ENCODE measurements at regions of chr18 and their contacts with region 1.

Region 1: DNA sequence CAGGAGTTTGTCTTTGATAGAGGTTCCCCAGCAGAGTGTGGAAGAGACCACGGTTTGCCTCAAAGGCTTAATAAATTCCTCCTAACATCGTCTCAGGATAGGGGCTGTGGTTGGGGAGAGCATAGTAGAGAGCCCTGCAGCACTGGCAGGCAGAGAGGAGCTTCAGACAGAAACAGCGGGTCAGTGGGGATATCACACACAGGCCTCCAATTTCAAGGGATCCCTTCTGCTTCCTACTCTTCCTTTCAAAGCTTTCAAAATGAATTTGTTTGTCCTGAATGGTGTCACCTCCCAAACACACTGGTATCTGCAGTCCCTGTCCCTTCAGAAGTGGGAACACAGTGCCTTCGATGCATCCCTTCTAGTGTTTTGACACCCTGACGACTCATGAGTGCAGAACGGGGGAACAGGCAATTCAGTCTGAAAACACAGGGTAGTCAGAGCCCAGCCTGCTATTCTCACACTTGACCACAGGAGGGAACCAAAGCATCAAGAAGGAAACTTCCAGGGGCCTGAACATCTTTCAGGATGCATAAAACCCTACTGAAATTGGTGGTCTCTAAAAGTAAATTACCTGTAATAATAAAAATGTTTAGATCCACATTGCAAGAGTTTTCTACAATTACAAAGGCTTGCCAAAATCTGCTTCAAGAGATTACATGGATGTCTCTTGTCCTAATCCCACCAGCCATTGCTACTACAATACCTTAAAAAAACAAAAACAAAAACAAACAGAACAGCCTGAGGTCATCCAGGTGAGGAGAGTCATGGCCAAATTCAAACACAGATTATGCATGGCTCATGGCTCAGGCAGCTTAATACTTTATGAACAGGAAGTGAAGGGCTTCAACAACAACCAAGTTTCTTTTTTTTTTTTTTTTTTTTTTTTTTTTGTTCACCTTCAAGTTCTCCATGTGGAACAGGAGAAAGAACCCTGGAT is 49.8 kb downstream of the SLC14A2 start:
- DNase-seq: peak; percentile 76
- CTCF ChIP-seq: peak; percentile 92

Region 2: GRCh38 chr18:45517181-45517741 is 147.8 kb before region 1 on chr18:
- CTCF ChIA-PET with region 1: no interaction called
- POLR2A ChIA-PET with region 1: no interaction called
- DNase-seq: no peak
- CTCF ChIP-seq: no peak

Region 3: GRCh38 chr18:45677276-45677807 is 12.2 kb after region 1 on chr18:
- CTCF ChIA-PET with region 1: interaction called, 21 read pairs
- POLR2A ChIA-PET with region 1: no interaction called
- DNase-seq: no peak
- CTCF ChIP-seq: no peak

Region 4: DNA sequence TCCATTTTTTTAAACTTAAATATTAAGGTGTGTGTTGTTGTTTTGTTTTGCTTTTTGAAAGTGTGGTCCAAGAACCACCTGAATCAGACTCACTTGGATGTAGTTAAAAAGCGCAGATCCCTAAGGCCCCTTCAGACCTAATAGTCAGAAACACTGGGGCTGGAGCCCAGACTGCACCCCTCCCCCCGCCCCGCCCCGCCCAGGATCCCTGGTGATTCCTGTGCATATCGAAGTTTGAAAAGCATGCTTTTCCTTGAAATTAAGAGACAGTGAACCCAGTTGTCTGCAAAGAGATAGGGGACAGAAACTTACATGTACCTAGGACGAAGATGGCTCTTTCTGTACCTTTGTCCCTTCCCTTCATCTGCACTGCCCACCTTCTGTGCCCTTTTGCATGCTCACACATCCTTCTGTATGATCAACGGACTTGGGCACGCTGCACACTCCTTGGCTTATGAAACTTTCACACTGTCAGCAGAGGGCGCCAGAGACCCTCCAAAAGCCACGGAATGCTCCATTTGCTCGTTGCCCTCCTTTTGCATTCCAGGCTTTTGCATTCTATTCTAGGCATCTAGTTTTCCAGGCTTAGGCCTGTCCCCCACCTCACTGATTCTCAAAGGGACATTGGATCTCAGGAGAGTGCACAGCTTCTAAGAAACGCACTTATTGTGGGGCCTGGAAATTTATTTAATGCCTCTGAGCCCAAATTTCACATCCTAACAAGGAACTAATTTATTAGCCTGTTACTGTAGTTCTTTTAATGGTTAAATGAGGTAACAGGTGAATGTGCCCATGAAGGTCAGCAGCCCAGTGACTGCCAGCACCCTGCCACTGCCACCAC is 26.1 kb after region 1 on chr18:
- CTCF ChIA-PET with region 1: interaction called, 86 read pairs
- POLR2A ChIA-PET with region 1: no interaction called
- DNase-seq: peak; percentile 72
- CTCF ChIP-seq: peak; percentile 86

Region 5: GRCh38 chr18:45730832-45731575 is 65.9 kb after region 1 on chr18:
- CTCF ChIA-PET with region 1: interaction called, 13 read pairs
- POLR2A ChIA-PET with region 1: no interaction called
- DNase-seq: no peak
- CTCF ChIP-seq: no peak

Region 6: DNA sequence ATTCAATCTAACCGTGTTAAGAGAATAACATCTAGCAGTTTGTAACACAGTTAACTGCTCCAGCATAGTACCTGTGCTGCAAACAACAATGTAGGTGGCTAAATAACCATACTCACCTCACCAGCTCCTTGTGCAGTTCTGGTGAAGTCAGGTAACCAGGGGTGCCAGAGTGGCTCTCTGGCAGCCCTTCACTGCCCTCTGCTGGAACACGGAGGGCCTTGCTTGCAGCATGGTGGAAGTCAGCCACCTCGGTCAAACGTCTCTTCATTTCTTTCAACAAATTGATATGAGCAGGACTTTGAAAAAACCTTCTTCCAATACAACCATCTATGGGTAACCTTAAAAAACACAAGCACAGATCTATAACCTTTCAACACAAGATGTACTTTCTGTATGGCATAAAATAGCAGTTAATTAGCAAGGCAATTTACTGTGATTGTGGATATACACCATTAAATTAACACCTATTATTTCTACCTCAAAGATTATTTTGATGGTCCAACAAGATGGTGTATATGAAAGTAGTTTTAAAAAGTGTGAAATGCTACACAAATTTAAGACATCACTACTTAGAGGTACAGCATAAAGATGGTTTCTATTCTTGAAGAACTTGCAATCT is 245.4 kb after region 1 on chr18:
- CTCF ChIA-PET with region 1: interaction called, 11 read pairs
- POLR2A ChIA-PET with region 1: no interaction called
- DNase-seq: peak; percentile 66
- CTCF ChIP-seq: peak; percentile 69

Measured in GM10248 (cell line).